GM10248 (cell line): ENCODE measurements at regions of chr4 and their contacts with region 1.

Region 1: GRCh38 chr4:2441393-2442174 is 22.8 kb downstream of the CFAP99 start:
- DNase-seq: peak; percentile 92
- CTCF ChIP-seq: peak; percentile 87

Region 2: GRCh38 chr4:2451821-2452785 is 10.5 kb after region 1 on chr4:
- CTCF ChIA-PET with region 1: interaction called, 16 read pairs
- POLR2A ChIA-PET with region 1: no interaction called
- DNase-seq: no peak
- CTCF ChIP-seq: no peak

Region 3: DNA sequence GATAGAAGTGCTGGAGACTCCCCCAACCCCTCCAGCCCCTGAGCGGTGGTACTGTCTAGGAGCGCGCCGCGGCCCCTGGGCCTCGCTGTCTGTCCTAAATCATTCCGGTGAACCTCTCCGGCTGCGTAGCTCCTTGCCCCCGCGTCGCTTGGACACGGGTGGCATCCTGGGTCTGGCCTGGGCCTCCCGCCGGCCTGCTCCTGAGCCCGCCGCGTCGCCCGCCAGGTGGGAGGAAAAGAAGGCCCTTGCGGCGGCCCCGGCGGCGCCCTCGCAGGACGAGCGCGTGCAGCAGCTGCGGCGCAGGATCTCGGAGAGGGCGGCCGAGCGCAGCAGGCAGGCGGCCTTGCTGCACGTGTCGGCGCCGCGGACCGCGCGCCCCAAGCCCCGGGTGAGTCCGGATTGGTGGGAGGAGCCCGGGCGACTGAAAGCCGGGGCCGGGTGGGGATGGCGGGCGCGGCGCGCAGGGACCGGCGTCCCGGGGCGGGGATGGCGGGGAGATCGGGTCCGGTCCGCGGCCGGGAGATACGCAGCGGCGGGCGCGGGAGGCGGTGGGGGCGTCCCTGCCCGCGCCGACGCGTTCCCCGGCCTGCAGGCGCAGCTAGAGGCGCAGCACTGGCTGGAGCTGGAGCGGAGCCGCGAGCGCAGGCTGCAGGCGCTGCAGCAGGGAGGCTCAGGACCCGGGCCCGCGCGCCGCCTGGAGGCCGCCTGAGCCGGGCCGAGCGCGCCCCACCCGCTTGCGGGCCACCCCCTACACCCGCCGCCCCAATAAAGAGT is 20.8 kb after region 1 on chr4:
- CTCF ChIA-PET with region 1: interaction called, 10 read pairs
- POLR2A ChIA-PET with region 1: no interaction called
- DNase-seq: peak; percentile 84
- CTCF ChIP-seq: peak; percentile 53